Tibial artery (tissue), 4 donors: ENCODE measurements at regions of chr3 and their contacts with region 1.

Region 1: DNA sequence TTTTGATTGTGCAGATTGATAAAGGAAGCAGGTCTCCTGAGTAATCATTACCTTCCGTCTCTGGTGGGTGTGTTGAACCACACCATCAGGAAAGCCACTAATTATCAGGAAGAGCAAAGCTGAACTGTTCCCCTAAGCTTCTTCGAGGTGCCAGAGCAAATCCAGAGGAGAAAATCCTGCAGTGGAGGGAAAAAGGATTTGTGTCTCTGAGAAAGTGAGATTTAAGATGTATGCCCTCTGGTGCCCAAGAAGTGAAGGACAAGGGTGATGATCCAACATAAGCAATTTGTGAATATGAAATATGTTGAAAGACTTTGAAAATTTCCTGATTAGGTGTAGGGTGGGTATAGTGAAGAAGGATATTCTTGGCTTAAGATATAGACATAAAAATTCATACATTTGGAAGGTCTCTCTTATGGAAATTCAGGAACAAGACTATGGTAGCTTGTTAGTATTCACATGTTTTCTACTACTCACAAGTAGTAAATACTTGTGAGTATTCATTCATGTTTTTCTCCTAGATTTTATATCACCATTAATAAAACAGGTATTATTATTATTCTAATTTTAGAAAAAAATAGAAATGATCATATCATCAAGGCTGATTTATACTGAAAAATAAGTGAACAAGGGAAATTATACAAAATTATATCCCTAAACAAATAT is 34.8 kb downstream of the COMMD2 start:
- DNase-seq: peak in 1 of 2 donors; percentile 66
- H3K4me3 ChIP-seq: no peak overlapping the region
- H3K27ac ChIP-seq: no peak overlapping the region
- H3K4me1 ChIP-seq: no peaks in the 10 kb centered on the region
- H3K27me3 ChIP-seq: no peaks in the 10 kb centered on the region
- CTCF ChIP-seq: peak; percentile 73 to 85

Region 2: DNA sequence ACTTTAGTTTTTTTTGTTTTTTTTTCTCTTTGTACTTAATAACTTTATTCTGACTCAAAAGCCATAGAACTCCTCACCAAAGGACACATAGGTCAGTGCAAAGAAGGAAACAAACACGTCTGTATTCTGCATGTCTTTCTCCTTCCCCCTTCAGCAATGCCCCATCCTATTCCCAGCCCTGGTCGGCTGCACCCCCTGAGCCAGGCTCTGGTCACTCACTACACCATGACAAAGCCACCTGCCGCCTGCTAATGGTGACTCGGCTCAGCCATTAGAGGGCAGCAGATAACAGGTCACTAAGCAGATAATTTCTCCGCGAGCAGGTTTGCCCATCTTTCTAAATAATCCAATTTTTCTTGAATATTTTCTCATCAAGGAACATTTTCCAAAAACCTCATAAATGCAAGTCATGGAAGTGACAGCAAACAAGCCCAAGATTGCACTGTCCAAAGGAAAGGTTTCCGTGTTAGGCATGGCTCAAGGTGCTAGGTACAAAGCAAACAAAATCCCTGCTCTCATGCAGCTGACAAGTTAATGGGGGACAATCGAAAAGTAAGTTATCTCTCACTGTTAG is 205.2 kb before region 1 on chr3:
- intact Hi-C with region 1: loop called (anchors 5 kb)
- DNase-seq: peak; percentile 70 to 76
- H3K4me3 ChIP-seq: no peak overlapping the region
- H3K27ac ChIP-seq: no peak overlapping the region
- H3K4me1 ChIP-seq: peaks cover 0 to 27% (median 17%) of the 10 kb centered on the region in 4 donors
- H3K27me3 ChIP-seq: no peaks in the 10 kb centered on the region
- CTCF ChIP-seq: peak; percentile 81 to 82

Region 3: GRCh38 chr3:149527531-149528339 is 189.8 kb before region 1 on chr3:
- intact Hi-C with region 1: loop called (anchors 5 kb)
- DNase-seq: peak in 1 of 2 donors; percentile 37
- H3K4me3 ChIP-seq: no peak overlapping the region
- H3K27ac ChIP-seq: peak overlapping the region; percentile 29 to 52
- H3K4me1 ChIP-seq: peaks cover 0 to 49% (median 28%) of the 10 kb centered on the region in 4 donors
- H3K27me3 ChIP-seq: no peaks in the 10 kb centered on the region
- CTCF ChIP-seq: peak in 1 of 2 experiments; percentile 30

Region 4: DNA sequence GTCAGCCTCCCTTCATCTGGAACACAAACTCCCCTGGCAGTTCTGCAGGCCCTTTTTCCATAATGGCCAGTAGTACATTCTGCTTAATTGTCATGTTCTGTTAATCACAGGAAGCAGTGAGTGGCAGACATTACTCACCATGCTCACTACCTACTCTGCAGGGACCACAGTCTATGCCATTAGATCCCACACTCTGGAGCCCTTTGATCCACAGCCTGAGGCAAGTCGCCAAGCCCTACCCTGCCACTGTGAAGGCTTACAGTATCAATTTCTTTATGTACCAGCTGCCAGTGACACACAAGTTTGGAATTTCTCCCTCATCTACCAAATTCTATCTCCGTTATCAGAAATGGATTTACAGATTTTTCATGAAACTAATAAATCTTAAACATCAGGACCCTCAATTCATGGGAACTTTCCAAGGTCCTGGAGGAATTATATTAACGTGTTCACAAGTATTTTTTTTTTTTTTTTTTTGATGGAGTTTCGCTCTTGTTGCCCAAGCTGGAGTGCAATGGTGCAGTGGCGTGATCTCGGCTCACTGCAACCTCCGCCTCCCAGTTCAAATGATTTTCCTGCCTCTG is 39.1 kb before region 1 on chr3:
- intact Hi-C with region 1: no loop called
- DNase-seq: no peak
- H3K4me3 ChIP-seq: no peak overlapping the region
- H3K27ac ChIP-seq: no peak overlapping the region
- H3K4me1 ChIP-seq: no peaks in the 10 kb centered on the region
- H3K27me3 ChIP-seq: no peaks in the 10 kb centered on the region
- CTCF ChIP-seq: no peak

Region 5: GRCh38 chr3:149947231-149947630 is 229.7 kb after region 1 on chr3:
- intact Hi-C with region 1: no loop called
- DNase-seq: no peak
- H3K4me3 ChIP-seq: no peak overlapping the region
- H3K27ac ChIP-seq: no peak overlapping the region
- H3K4me1 ChIP-seq: peaks cover 0 to 18% (median 2%) of the 10 kb centered on the region in 4 donors
- H3K27me3 ChIP-seq: no peaks in the 10 kb centered on the region
- CTCF ChIP-seq: no peak